ENCODE measurements at regions of chr21 and their contacts with region 1.

Region 1: DNA sequence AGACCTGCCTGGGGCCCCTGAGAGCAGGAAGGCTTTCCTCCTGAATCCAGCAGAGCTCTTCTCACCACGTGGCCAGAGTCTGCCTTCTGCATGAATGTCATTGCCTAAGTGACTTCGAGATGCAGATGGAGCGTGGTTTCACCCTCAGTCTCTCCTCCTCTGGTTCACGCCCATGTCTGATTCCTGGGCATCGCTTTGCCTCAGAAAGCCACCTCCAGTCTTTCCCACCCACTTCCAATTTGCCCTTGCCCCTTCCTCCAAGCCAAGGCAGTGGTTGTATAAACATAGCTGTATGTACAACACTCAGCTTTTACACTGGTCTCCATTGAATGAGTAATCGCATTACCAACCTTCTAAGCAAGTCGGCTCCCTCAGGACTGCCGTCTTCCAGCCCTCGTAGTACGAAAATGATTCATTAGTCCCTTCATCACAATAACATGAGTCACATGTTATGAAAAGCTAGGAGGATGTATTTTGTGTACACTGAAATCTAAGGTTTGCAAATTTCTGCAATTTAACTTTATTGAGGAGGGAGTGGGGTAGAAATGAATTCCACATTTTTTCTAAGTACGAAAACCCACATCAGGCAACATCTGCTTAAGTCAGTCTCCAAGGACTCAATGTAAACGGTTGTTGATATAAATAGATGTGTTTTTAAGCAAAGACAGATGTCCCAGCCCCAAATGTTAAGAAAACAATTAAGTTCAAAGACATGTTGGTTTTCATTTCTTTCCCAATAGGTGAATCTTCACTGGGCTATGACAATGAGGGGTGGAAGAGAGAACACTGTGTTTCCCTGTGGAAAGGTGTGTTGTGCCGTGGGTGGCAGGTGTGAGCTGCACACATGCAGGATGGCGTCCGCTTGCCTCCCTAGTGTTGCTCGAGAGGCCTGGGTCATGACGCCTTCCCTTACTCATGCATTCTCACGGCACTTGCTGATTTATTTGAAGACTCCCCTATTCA is 32.3 kb upstream of the ETS2 start:
- DNase-seq: peak; percentile 24
- H3K4me3 Mint-ChIP-seq: peak overlapping the region; percentile 27
- H3K27ac Mint-ChIP-seq: peak overlapping the region; percentile 34
- H3K4me1 Mint-ChIP-seq: peaks cover 38% of the 10 kb centered on the region
- H3K27me3 Mint-ChIP-seq: no peaks in the 10 kb centered on the region
- CTCF ChIP-seq: no peak

Region 2: GRCh38 chr21:38787461-38788274 is 14.3 kb after region 1 on chr21:
- CTCF ChIA-PET with region 1: interaction called, 11 read pairs
- intact Hi-C with region 1: no loop called
- DNase-seq: peak; percentile 89
- H3K4me3 Mint-ChIP-seq: peak overlapping the region; percentile 67
- H3K27ac Mint-ChIP-seq: peak overlapping the region; percentile 89
- H3K4me1 Mint-ChIP-seq: peaks cover 17% of the 10 kb centered on the region
- H3K27me3 Mint-ChIP-seq: no peaks in the 10 kb centered on the region
- CTCF ChIP-seq: no peak